PC-3 (cell line): ENCODE measurements at regions of chr2 and their contacts with region 1.

Region 1: GRCh38 chr2:54613794-54614257 is 109.6 kb upstream of the EML6 start:
- DNase-seq: peak; percentile 75
- ATAC-seq: peak; percentile 91
- H3K4me3 ChIP-seq: 0 out of 2 replicates have a peak overlapping the region, but pooled peaks have one; percentile 3
- H3K27ac ChIP-seq: peak overlapping the region; percentile 89
- H3K4me1 ChIP-seq: peaks cover 28% of the 10 kb centered on the region
- H3K27me3 ChIP-seq: no peaks in the 10 kb centered on the region
- CTCF ChIP-seq: no peak

Region 2: DNA sequence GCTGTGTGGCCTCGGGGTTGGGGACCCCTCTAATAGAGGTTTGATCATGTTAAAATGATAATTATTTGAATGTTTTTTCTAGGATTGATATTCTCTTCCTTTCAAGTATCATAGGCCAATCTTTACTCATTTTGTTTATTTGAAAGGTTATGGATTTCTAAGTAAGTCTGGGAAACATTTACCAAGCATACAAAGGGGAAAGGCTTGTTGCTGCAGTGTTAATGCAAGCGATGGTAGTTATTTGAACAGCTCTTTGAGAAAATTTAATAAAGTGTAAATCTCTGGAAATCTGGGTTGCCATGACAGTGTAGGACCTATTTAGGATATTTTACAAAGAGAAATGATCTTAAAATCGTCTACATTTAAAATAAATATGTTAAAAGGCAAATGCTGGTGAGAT is 101.6 kb before region 1 on chr2:
- CTCF ChIA-PET with region 1: no interaction called
- POLR2A ChIA-PET with region 1: no interaction called
- intact Hi-C with region 1: no loop called
- DNase-seq: no peak
- ATAC-seq: no peak
- H3K4me3 ChIP-seq: no peak overlapping the region
- H3K27ac ChIP-seq: no peak overlapping the region
- H3K4me1 ChIP-seq: no peaks in the 10 kb centered on the region
- H3K27me3 ChIP-seq: no peaks in the 10 kb centered on the region
- CTCF ChIP-seq: no peak

Region 3: GRCh38 chr2:54522624-54523281 is 91.1 kb before region 1 on chr2:
- CTCF ChIA-PET with region 1: interaction called, 3 read pairs
- POLR2A ChIA-PET with region 1: no interaction called
- intact Hi-C with region 1: loop called (anchors 1 kb)
- DNase-seq: peak; percentile 88
- ATAC-seq: peak; percentile 79
- H3K4me3 ChIP-seq: no peak overlapping the region
- H3K27ac ChIP-seq: peak overlapping the region; percentile 28
- H3K4me1 ChIP-seq: peaks cover 35% of the 10 kb centered on the region
- H3K27me3 ChIP-seq: no peaks in the 10 kb centered on the region
- CTCF ChIP-seq: peak; percentile 79

Region 4: DNA sequence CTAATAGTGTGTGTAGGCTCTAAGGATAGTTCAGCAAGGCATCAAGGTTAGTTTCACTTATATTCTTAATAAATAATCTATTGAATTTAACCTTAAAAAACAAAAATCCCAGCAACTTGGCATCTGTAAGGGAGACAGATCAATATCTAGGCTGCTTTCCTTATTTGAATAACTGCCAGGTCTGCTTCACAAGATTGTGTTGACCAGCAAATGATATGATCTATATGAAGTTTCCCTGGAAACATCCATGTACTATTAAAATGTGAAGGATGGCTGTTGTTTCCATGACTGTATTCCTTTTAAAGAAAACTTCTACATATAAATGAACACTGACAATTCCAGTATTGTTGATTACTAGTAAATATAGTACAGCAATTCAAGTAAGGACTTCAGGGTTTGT is 48.3 kb before region 1 on chr2:
- CTCF ChIA-PET with region 1: interaction called, 14 read pairs
- POLR2A ChIA-PET with region 1: no interaction called
- intact Hi-C with region 1: loop called (anchors 5 kb)
- DNase-seq: no peak
- ATAC-seq: no peak
- H3K4me3 ChIP-seq: no peak overlapping the region
- H3K27ac ChIP-seq: no peak overlapping the region
- H3K4me1 ChIP-seq: peaks cover 34% of the 10 kb centered on the region
- H3K27me3 ChIP-seq: no peaks in the 10 kb centered on the region
- CTCF ChIP-seq: no peak

Region 5: DNA sequence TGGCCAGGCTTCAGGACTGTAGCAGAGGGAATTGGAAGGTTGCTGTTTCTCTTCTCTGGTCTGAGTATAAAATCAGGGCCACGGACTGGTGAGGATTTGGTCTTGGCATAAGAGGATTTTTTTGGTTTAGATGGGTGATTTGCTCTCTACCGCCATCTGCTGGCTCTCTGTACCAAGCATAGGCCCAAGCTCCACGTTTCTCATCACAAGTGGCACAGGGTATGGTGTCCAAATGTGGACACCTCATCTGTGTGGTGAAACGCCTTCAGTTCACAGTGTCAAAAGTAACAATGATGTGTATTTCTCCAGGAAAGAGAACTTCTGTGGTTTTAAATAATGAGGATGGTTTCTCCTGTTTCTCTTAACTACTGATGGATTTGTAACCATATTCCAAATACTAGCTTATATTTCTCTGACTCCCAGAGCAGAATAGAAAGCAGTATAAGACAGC is 224.8 kb after region 1 on chr2:
- CTCF ChIA-PET with region 1: no interaction called
- POLR2A ChIA-PET with region 1: no interaction called
- intact Hi-C with region 1: no loop called
- DNase-seq: peak; percentile 85
- ATAC-seq: peak; percentile 68
- H3K4me3 ChIP-seq: no peak overlapping the region
- H3K27ac ChIP-seq: no peak overlapping the region
- H3K4me1 ChIP-seq: peaks cover 4% of the 10 kb centered on the region; the same call in 1 of the 2 replicates
- H3K27me3 ChIP-seq: no peaks in the 10 kb centered on the region
- CTCF ChIP-seq: peak; percentile 94

Region 6: DNA sequence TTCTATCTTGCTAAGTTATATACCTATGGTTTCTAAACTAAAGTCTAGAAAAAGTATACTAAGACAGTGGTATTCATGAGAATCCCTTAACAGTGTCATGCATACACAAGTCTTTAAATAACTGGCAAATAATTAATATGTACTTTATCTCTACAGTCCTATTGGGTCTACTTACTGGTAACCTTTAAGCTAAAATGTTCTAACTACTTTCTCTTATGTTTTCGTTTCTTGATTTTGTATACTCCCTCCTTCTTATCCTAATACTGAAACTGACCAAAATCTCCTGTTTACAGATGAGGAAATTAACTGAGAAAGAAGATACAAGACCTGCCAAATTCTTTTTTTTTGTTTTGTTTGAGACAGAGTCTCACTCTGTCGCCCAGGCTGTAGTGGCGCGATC is 731.2 kb after region 1 on chr2:
- CTCF ChIA-PET with region 1: no interaction called
- POLR2A ChIA-PET with region 1: interaction called, 22 read pairs
- intact Hi-C with region 1: no loop called
- DNase-seq: no peak
- ATAC-seq: no peak
- H3K4me3 ChIP-seq: no peak overlapping the region
- H3K27ac ChIP-seq: no peak overlapping the region
- H3K4me1 ChIP-seq: no peaks in the 10 kb centered on the region
- H3K27me3 ChIP-seq: no peaks in the 10 kb centered on the region
- CTCF ChIP-seq: no peak